ENCODE measurements at regions of chr4 and their contacts with region 1.

Region 1: DNA sequence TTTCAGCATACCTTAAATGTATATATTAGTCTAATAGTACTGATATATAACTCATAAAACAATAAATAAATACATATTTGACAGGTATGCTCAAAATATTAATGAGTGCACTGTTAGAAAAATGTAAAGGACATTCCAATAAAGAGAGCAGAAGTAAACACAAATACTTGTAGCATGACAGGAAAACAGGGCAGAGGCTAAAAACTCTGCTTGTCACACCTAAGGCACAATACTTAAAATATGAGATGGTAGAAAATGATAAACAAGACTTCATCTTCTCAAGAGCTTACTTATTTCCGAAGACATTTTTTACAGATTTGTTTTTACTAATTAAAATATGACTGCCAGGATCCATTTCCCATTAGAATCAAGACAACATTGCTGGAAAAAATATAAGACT is 304.7 kb upstream of the GK2 start:
- DNase-seq: no peak
- ATAC-seq: no peak
- H3K4me3 ChIP-seq: no peak overlapping the region
- H3K4me3 Mint-ChIP-seq: no peak overlapping the region
- H3K27ac ChIP-seq: no peak overlapping the region
- H3K27ac Mint-ChIP-seq: no peak overlapping the region
- H3K4me1 ChIP-seq: no peaks in the 10 kb centered on the region
- H3K4me1 Mint-ChIP-seq: no peaks in the 10 kb centered on the region
- H3K27me3 ChIP-seq: no peaks in the 10 kb centered on the region
- H3K27me3 Mint-ChIP-seq: peaks cover 6% of the 10 kb centered on the region in 2 donors

Region 2: GRCh38 chr4:79227860-79228259 is 484.9 kb before region 1 on chr4:
- CTCF ChIA-PET with region 1: no interaction called
- POLR2A ChIA-PET with region 1: no interaction called
- DNase-seq: no peak
- ATAC-seq: no peak
- H3K4me3 ChIP-seq: no peak overlapping the region
- H3K4me3 Mint-ChIP-seq: no peak overlapping the region
- H3K27ac ChIP-seq: no peak overlapping the region
- H3K27ac Mint-ChIP-seq: no peak overlapping the region
- H3K4me1 ChIP-seq: no peaks in the 10 kb centered on the region
- H3K4me1 Mint-ChIP-seq: no peaks in the 10 kb centered on the region
- H3K27me3 ChIP-seq: no peaks in the 10 kb centered on the region
- H3K27me3 Mint-ChIP-seq: no peaks in the 10 kb centered on the region

Region 3: GRCh38 chr4:79413032-79413885 is 299.5 kb before region 1 on chr4:
- CTCF ChIA-PET with region 1: no interaction called
- POLR2A ChIA-PET with region 1: interaction called, 3 to 12 read pairs
- DNase-seq: no peak
- ATAC-seq: no peak
- H3K4me3 ChIP-seq: no peak overlapping the region
- H3K4me3 Mint-ChIP-seq: no peak overlapping the region
- H3K27ac ChIP-seq: no peak overlapping the region
- H3K27ac Mint-ChIP-seq: no peak overlapping the region
- H3K4me1 ChIP-seq: no peaks in the 10 kb centered on the region
- H3K4me1 Mint-ChIP-seq: no peaks in the 10 kb centered on the region
- H3K27me3 ChIP-seq: no peaks in the 10 kb centered on the region
- H3K27me3 Mint-ChIP-seq: no peaks in the 10 kb centered on the region

Measured in T-cell (primary cell).